H1 (cell line): ENCODE measurements at regions of chr4 and their contacts with region 1.

Region 1: DNA sequence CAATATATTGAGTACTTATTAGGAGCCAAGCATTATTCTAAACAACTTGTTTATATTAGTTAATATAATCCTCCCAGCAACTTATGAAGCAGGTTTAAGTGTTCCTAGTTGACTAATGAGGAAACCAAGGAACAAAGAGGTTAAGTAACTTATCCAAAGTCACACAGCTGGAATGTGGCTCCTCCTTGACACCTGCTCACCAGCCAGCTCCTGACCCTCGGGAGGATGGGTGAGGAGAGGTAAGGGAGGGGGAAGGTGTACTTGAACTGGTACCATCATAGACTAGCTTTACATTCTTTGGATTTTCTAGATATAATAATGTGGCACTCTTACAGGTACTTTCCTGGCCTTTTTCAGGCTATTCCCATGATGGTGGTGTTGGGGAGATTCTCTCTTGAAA is 50.7 kb downstream of the ARHGEF38 start:
- DNase-seq: no peak
- H3K4me3 ChIP-seq: no peak overlapping the region
- H3K27ac ChIP-seq: no peak overlapping the region
- H3K4me1 ChIP-seq: no peaks in the 10 kb centered on the region
- H3K27me3 ChIP-seq: no peaks in the 10 kb centered on the region
- CTCF ChIP-seq: no peak
- EP300 ChIP-seq: no peak
- POLR2A ChIP-seq: no peak
- RAD21 ChIP-seq: no peak

Region 2: DNA sequence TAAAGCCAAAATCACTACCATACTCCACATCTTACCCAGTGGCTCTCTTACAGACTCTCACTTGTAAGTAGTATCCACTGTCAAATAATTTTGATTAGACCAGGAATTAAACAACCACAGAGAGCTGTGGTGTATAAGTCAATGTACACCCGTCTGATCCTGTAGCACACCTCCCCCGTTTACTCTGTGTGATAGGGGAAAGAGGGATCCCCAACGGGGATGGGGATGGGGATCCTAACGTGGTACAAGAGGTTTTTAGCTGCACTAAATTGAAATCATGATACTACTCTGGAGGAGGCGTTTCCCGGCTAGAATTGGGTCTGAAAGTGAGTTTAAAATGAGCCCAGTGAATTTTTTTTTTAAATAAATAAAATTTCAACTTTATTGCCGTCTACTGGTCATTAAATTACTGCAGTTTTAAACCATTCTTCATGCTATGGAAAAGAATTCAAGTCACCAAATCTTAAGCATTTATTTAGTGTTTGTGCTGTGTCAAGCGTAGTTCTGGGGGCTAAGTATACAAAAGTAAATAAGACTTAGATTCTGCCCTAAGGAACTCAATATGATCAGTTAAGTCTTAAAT is 28.8 kb after region 1 on chr4:
- CTCF ChIA-PET with region 1: interaction called, 11 read pairs
- POLR2A ChIA-PET with region 1: no interaction called
- DNase-seq: no peak
- H3K4me3 ChIP-seq: no peak overlapping the region
- H3K27ac ChIP-seq: no peak overlapping the region
- H3K4me1 ChIP-seq: no peaks in the 10 kb centered on the region
- H3K27me3 ChIP-seq: no peaks in the 10 kb centered on the region
- CTCF ChIP-seq: no peak; a peak in 1 of 4 replicates
- EP300 ChIP-seq: no peak
- POLR2A ChIP-seq: no peak
- RAD21 ChIP-seq: 0 out of 4 replicates have a peak, but pooled peaks of 1 of the 2 experiments have one; percentile 4